HEK293 (cell line): ENCODE measurements at regions of chr15 and their contacts with region 1.

Region 1: GRCh38 chr15:70097337-70098169 is at the start of gene TLE3:
- H3K4me3 ChIP-seq: peak within 1 kb of the TSS; percentile 92
- H3K27ac ChIP-seq: peak within 1 kb of the TSS; percentile 99
- H3K4me1 ChIP-seq: peaks cover 34% of the 10 kb centered on the region
- CTCF ChIP-seq: peak; percentile 84

Region 2: DNA sequence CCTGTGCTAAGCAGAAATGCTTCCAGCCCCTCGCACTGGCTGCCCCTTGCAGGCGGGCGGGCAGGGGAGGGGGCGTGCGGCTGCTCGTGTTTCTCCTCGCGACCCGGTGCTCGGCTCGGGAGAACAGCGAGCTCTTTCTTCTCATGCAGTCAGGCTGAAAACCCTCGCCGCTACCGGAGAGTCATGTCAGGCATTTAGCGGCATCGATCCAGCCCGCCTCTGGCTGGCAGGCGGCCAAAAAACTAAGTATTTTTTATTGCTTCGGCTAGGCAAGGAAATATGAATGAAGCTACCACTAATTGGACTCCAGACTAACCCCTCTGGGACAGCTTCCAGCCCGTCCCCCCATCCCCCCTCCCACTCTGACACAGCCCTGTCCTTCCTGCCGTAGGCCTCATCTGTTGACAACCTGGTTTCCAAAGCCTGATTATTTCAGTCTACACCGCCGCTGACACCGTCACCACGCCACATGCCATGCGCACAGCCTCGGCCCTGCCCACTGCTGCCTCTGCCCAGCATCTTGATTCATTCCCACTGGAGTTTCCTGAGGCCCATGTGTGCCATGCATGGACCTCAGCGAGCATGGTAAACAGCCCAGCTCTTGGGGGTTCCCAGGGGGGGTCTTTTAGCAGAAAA is 35.1 kb before region 1 on chr15:
- CTCF ChIA-PET with region 1: interaction called, 3 read pairs
- POLR2A ChIA-PET with region 1: interaction called, 31 read pairs
- H3K4me3 ChIP-seq: no peak overlapping the region
- H3K27ac ChIP-seq: peak overlapping the region; percentile 85
- H3K4me1 ChIP-seq: peaks cover 34% of the 10 kb centered on the region
- CTCF ChIP-seq: no peak

Region 3: DNA sequence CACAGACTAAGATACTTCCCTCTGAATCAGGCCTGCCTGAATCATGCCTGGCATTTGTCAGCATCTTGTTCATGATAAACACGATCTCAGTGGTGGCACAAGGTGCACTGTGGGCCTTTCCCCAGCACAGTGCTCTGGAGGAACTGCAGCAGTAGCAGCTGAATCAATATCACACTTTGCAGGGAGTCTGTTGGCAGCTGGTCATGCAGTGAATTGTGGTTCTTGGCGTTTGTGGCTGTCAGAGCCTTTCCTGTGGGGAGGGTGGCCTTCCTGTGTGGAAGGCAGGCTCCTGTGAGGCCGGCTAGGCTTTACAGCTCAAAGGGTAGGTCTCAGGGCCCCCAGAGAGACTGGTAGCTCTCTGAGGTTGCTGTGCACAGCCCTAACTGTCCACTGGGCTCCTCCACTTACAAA is 54.5 kb after region 1 on chr15:
- CTCF ChIA-PET with region 1: interaction called, 4 read pairs
- POLR2A ChIA-PET with region 1: interaction called, 36 read pairs
- H3K4me3 ChIP-seq: no peak overlapping the region
- H3K27ac ChIP-seq: peak overlapping the region; percentile 33; the same call in 1 of the 2 replicates
- H3K4me1 ChIP-seq: peaks cover 42% of the 10 kb centered on the region
- CTCF ChIP-seq: no peak

Region 4: DNA sequence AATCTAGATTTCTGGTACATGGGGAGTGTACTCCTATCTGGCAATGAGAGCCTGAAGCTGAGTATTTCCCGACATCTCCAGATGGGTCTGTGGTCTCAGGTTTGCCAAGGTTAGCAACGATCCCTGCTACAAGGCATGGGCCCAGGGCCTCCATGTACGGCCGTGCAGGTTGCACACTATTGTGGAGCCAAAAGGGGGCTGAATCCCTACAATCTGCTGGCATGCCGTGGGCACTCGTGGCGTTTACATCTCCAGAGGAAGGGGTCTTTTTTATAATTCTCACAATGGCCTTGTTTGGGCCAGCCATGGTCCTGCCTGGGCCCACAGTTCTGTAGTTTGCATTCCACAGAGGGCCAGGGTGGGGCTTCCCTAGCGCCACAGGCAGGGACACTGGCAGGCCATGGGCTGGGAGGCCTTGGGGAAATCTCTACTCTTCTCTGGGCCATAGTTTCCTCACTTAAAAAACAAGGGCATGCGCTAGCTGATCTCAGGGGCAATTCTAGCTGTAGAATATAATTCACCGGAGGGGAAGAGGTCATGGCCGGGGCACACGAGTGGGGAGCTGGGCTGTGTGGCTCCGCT is 69.0 kb after region 1 on chr15:
- CTCF ChIA-PET with region 1: interaction called, 3 read pairs
- POLR2A ChIA-PET with region 1: interaction called, 11 read pairs
- H3K4me3 ChIP-seq: no peak overlapping the region
- H3K27ac ChIP-seq: no peak overlapping the region
- H3K4me1 ChIP-seq: peaks cover 6% of the 10 kb centered on the region
- CTCF ChIP-seq: no peak

Region 5: DNA sequence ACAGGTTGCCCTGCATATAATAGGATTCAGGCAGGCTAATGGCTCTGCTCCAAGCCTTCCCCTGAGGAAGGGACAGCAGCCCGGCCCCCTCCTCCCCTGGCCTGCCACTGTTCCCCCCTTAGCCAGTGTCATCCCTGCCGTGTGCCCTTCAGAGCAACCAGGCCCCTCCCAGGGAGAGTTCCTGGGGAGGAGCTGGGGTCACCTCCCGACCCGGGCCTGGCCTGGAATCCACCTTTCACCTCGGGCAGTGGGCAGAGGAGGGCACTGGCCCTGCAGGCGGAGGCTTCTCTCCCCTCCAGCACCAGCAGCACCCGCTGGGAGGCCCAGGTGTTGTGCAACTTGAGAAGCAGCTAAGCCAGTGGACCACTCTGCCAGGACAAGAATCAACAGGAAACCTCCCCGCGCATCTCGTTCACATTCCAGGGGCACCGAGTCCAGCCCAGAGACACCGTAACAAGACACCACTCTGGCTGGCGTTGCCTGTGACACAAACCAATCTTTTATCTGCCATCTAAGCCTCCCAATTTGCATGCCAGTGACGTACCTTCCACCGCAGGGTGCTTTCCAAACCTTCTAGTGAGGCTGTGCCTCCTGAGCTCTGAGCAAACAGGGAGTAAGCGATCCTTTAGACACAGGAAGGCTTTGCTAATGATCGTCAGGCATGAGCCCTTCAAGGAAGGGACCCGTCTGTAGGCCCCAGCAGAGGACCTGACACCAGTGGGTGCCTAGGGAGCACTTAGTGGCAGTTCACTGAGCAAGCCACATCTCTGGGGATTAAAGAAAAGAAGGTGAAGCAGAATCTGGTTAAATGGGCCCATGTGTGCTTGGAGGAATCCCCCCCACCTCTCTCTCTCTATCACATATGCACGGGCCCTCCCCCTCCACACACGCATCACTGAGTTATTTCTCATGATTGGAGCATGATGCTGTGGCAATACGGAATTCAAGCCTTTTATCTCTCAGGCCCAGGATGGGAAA is 99.0 kb after region 1 on chr15:
- CTCF ChIA-PET with region 1: interaction called, 5 read pairs
- POLR2A ChIA-PET with region 1: interaction called, 25 read pairs
- H3K4me3 ChIP-seq: no peak overlapping the region
- H3K27ac ChIP-seq: peak overlapping the region; percentile 83
- H3K4me1 ChIP-seq: peaks cover 46% of the 10 kb centered on the region
- CTCF ChIP-seq: no peak

Region 6: DNA sequence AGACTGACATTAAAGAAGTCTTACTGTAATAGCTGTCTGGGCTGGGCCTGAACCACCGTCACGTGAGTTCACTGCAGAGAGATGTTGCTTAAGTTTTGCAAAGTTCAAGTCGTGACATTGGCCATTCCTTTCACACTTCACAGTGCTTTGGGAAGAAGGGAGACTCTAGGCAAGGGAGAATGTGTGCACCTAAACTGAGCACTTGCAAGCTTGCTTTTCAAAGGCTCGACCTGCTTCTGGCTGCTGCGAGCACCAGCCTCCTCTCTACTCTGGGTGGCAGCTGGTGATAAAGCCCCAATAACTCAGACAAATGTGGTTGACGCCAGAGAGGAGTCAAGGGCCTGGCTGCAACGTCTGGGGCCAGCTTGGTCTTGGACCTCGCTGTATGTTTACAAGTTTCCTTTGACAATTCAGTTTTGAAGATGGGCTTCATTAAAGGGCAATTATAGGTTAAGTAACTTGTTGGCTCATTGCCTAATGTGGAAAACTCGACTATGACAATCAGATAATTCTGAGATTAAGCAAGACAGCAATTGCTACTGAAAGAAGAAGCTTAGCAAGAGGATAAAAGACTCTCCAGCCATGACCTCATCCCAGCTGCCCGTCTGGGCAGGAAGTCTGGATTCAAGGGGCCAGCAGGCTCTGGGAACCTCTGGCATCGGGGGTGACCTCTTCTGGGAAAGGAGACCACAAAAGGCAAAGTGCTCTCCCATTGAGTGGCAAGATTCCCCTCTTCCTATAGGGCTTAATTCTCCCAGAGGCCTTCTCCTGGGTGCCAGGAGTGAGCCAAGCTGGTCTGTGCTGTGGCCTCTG is 242.3 kb after region 1 on chr15:
- CTCF ChIA-PET with region 1: interaction called, 3 read pairs
- POLR2A ChIA-PET with region 1: interaction called, 13 read pairs
- H3K4me3 ChIP-seq: no peak overlapping the region
- H3K27ac ChIP-seq: peak overlapping the region; percentile 22; the same call in 1 of the 2 replicates
- H3K4me1 ChIP-seq: peaks cover 9% of the 10 kb centered on the region
- CTCF ChIP-seq: no peak

Region 7: GRCh38 chr15:70504299-70504951 is 406.9 kb after region 1 on chr15:
- CTCF ChIA-PET with region 1: interaction called, 4 read pairs
- POLR2A ChIA-PET with region 1: interaction called, 28 read pairs
- H3K4me3 ChIP-seq: no peak overlapping the region
- H3K27ac ChIP-seq: peak overlapping the region; percentile 78
- H3K4me1 ChIP-seq: peaks cover 54% of the 10 kb centered on the region
- CTCF ChIP-seq: no peak